AG04449 (cell line): ENCODE measurements at regions of chr21 and their contacts with region 1.

Region 1: GRCh38 chr21:37700641-37701202 is 215.5 kb downstream of the KCNJ6 start:
- DNase-seq: peak; percentile 45
- H3K4me3 ChIP-seq: no peak overlapping the region
- CTCF ChIP-seq: peak; percentile 72

Region 2: GRCh38 chr21:37580666-37581065 is 120.1 kb before region 1 on chr21:
- CTCF ChIA-PET with region 1: no interaction called
- POLR2A ChIA-PET with region 1: no interaction called
- DNase-seq: no peak
- H3K4me3 ChIP-seq: no peak overlapping the region
- CTCF ChIP-seq: no peak

Region 3: DNA sequence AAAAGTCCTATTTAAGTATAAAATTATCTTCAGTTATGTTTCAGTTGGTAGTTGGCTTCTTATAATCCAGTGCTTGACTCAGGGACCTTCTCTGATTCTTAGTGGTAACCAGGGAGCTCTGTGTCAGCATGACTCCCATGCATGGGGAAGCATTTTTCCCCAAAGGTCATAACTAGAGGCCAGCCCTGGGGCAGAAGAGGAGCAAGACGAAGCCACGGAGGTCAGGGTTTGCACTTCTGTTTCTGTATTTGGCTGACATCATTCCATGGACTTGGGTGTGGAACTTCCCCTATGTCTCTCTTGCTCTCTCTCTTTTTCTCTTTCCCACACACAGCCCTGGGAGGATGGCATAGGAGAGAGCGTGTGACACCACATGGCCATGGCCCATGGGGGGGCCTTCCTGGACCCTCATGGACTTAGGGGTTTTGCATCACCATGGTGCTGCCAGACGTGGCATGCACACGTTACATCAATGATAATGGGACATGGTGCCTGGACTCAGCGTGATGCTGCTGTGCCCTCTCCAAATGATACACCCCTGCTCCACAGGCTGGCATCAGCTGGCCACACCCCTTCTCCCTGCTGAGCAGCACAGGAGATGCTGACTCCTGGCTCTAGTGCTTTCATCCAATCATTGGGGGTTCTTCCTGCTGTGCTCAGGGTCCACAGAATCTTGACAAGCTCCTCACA is 45.0 kb before region 1 on chr21:
- CTCF ChIA-PET with region 1: no interaction called
- POLR2A ChIA-PET with region 1: no interaction called
- DNase-seq: no peak
- H3K4me3 ChIP-seq: no peak overlapping the region
- CTCF ChIP-seq: no peak

Region 4: DNA sequence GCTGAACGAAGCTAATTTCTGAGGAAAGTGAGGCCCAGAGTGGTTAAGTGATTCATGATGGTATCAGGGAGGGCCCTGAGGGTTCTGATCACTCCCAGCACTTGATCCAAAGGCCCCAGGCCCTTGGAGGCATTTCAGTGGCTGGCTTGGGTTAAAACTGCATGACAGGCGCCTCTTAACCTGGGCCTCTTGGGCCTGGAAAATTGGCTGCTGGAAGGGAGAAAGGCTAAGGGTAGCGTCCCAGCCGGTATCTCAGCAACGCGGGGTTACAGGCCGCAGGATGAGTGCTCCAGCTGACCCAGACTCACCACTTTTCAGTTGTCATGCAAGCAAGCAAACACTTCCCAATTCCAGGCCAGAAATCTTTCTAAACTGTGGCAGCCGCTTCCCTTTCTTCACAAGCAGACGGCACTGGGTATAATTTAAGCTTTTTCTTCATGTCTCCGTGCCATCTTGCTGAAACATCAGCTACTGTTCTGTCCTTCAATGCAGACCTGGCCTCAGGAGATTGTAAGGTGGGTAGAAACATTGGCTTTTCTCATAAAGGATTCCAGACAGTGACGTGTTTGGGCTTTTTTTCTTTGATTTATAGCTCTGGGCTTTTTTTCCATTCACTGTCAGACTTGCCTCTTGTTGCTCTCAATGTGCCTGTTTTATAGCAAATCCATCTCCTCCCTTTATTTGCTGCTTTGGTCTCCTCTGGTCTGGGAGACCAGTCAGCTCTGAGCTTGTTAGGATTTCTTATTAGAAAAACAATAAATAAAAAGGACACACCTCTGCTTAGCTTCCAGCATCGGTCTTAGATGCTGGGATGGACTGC is 13.5 kb before region 1 on chr21:
- CTCF ChIA-PET with region 1: interaction called, 10 read pairs
- POLR2A ChIA-PET with region 1: no interaction called
- DNase-seq: no peak
- H3K4me3 ChIP-seq: no peak overlapping the region
- CTCF ChIP-seq: no peak

Region 5: DNA sequence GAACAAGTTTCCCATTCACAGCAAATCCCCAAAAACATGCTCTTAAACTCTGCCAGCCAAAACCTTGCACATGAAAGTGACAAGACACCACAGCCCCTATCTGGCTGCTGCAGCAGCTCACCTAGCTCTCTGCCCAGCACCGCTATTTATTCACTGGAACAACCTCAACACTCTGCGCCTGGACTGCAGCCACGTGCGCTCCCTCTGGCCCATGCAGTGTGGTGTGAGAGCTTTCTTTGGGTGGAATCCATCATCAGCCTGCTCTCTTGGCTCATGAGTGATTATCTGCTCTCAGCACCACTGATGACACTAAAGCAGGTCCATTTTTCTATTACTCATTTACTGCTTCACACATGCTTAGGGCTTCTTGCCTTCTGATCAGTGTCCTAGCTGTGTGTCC is 204.1 kb after region 1 on chr21:
- CTCF ChIA-PET with region 1: no interaction called
- POLR2A ChIA-PET with region 1: no interaction called
- DNase-seq: no peak
- H3K4me3 ChIP-seq: no peak overlapping the region
- CTCF ChIP-seq: no peak